ENCODE measurements at regions of chr17 and their contacts with region 1.

Region 1: GRCh38 chr17:1365445-1366039 is 34.5 kb downstream of the YWHAE start:
- DNase-seq: peak; percentile 40
- H3K4me3 ChIP-seq: no peak overlapping the region
- CTCF ChIP-seq: peak; percentile 74

Region 2: DNA sequence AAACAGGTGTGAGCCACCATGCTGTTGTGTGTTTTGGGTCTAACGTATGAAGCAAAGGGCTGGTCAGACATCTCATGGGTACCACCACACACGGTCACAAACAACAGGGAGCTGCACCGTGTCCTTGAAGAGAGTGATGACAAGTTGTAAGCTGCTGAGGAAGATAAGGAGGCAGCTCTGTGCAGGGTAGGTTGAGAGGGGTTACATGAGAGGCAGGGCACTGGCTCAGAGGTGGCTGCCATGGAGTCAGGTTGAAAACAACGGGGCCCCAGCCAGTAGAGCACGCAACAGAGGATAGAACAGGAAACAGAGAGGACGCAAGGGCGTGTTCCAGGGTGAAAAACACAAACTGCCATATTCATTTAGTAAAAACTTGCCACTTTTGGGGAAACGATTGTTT is 33.8 kb before region 1 on chr17:
- CTCF ChIA-PET with region 1: interaction called, 13 read pairs
- POLR2A ChIA-PET with region 1: no interaction called
- DNase-seq: no peak
- H3K4me3 ChIP-seq: no peak overlapping the region
- CTCF ChIP-seq: no peak

Region 3: GRCh38 chr17:1379930-1380313 is 14.4 kb after region 1 on chr17:
- CTCF ChIA-PET with region 1: interaction called, 133 read pairs
- POLR2A ChIA-PET with region 1: interaction called, 3 read pairs
- DNase-seq: no peak
- H3K4me3 ChIP-seq: no peak overlapping the region
- CTCF ChIP-seq: no peak

Region 4: GRCh38 chr17:1390433-1391367 is 25.2 kb after region 1 on chr17:
- CTCF ChIA-PET with region 1: interaction called, 55 read pairs
- POLR2A ChIA-PET with region 1: interaction called, 4 read pairs
- DNase-seq: no peak
- H3K4me3 ChIP-seq: no peak overlapping the region
- CTCF ChIP-seq: no peak

Region 5: DNA sequence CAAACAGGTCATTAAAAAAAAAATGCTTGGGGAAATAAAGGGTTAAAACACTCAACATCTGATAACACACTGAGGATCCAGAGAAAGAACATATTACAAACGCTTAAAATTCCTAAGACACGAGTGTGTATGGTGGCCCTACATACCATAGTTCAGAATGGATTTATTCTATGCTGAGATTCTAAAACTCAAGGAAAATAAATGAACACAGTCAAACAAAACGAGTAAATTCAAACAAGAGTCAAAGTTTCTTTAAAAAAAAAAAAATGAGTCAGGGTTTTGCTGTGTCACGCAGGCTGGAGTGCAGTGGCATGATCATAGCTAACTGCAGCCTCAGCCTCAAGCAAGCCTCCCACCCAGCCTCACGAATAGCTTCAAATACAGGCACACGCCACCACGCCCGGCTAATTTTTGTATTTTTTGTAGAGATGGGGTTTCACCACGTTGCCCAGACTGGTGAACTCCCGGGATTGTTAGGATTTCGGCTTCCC is 73.1 kb after region 1 on chr17:
- CTCF ChIA-PET with region 1: interaction called, 10 read pairs
- POLR2A ChIA-PET with region 1: no interaction called
- DNase-seq: peak; percentile 70
- H3K4me3 ChIP-seq: no peak overlapping the region
- CTCF ChIP-seq: no peak

Region 6: GRCh38 chr17:1488030-1488863 is 122.7 kb after region 1 on chr17:
- CTCF ChIA-PET with region 1: interaction called, 11 read pairs
- POLR2A ChIA-PET with region 1: no interaction called
- DNase-seq: no peak
- H3K4me3 ChIP-seq: peak overlapping the region; percentile 55
- CTCF ChIP-seq: no peak

Measured in AG04449 (cell line).